Natural killer cell (primary cell): ENCODE measurements at regions of chr9 and their contacts with region 1.

Region 1: DNA sequence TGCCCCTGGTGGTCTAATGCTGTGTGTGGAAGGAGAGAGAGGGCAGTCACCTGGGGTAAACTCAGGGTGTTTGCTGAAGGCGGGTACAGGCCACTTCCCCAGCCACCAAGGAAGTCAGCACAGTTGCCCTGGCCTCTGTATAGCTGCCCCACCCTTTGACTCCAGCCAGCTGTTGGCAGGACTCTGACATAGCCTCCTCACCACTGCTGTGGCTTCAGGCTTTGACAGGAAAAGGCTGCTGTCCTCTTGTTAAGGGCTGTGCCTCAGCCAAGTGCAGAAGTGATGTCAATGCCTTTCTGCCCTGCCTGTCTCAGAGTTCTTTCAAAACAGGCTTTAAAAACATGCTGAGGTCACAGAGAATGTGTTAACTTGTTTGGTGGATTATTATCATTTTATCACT is 487.2 kb upstream of the KLF4 start:
- DNase-seq: no peak
- ATAC-seq: peak in 1 of 3 donors; percentile 42
- H3K4me3 ChIP-seq: no peak overlapping the region
- H3K4me3 Mint-ChIP-seq: no peak overlapping the region
- H3K27ac ChIP-seq: no peak overlapping the region
- H3K27ac Mint-ChIP-seq: no peak overlapping the region
- H3K4me1 ChIP-seq: no peaks in the 10 kb centered on the region
- H3K4me1 Mint-ChIP-seq: no peaks in the 10 kb centered on the region
- H3K27me3 ChIP-seq: no peaks in the 10 kb centered on the region
- H3K27me3 Mint-ChIP-seq: no peaks in the 10 kb centered on the region
- CTCF ChIP-seq: no peak

Region 2: DNA sequence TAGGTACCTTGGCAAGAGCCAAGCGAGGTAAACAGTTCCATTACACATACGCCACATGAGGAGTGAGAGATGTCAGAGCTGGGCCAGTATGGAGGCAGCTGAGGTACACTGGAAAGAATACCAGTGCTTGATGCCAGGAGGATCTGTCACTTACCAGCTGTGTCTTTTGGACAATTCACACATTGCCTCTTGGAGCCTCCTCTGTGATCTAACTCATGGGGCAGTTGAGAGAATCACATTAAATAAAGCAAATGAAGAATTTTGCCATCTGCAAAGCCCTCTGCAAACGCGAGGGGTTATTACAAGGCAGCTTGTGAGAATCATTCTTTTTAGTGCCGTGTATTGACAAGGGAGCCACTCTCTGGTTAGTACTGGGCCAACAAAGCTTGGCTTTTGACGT is 57.5 kb before region 1 on chr9:
- intact Hi-C with region 1: loop called (anchors 10 kb)
- DNase-seq: no peak
- ATAC-seq: no peak
- H3K4me3 ChIP-seq: no peak overlapping the region
- H3K4me3 Mint-ChIP-seq: no peak overlapping the region
- H3K27ac ChIP-seq: no peak overlapping the region
- H3K27ac Mint-ChIP-seq: no peak overlapping the region
- H3K4me1 ChIP-seq: no peaks in the 10 kb centered on the region
- H3K4me1 Mint-ChIP-seq: no peaks in the 10 kb centered on the region
- H3K27me3 ChIP-seq: no peaks in the 10 kb centered on the region
- H3K27me3 Mint-ChIP-seq: peaks cover 0 to 3% of the 10 kb centered on the region in 2 donors
- CTCF ChIP-seq: no peak

Region 3: DNA sequence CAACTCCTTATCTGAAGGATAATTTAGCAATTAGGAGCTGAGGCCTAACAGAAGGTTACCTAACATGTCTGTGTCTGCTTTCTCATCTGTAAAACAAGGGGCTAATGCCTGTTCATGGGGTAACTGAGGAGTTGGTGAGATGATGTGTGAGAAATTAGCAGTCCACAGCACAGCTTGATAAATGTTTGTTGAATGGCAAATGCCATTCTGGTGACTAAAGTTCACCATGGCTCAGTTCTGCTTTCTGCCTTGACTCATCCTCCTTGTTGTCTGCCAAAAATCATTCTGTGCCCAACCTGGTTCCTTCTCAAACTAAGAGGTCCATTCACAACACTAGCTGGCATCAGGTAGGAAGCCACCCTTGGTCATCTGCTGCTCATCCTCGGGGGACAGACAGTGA is 64.8 kb after region 1 on chr9:
- intact Hi-C with region 1: no loop called
- DNase-seq: no peak
- ATAC-seq: no peak
- H3K4me3 ChIP-seq: no peak overlapping the region
- H3K4me3 Mint-ChIP-seq: no peak overlapping the region
- H3K27ac ChIP-seq: no peak overlapping the region
- H3K27ac Mint-ChIP-seq: no peak overlapping the region
- H3K4me1 ChIP-seq: no peaks in the 10 kb centered on the region
- H3K4me1 Mint-ChIP-seq: no peaks in the 10 kb centered on the region
- H3K27me3 ChIP-seq: no peaks in the 10 kb centered on the region
- H3K27me3 Mint-ChIP-seq: no peaks in the 10 kb centered on the region
- CTCF ChIP-seq: no peak